ENCODE measurements at regions of chr10 and their contacts with region 1.

Region 1: DNA sequence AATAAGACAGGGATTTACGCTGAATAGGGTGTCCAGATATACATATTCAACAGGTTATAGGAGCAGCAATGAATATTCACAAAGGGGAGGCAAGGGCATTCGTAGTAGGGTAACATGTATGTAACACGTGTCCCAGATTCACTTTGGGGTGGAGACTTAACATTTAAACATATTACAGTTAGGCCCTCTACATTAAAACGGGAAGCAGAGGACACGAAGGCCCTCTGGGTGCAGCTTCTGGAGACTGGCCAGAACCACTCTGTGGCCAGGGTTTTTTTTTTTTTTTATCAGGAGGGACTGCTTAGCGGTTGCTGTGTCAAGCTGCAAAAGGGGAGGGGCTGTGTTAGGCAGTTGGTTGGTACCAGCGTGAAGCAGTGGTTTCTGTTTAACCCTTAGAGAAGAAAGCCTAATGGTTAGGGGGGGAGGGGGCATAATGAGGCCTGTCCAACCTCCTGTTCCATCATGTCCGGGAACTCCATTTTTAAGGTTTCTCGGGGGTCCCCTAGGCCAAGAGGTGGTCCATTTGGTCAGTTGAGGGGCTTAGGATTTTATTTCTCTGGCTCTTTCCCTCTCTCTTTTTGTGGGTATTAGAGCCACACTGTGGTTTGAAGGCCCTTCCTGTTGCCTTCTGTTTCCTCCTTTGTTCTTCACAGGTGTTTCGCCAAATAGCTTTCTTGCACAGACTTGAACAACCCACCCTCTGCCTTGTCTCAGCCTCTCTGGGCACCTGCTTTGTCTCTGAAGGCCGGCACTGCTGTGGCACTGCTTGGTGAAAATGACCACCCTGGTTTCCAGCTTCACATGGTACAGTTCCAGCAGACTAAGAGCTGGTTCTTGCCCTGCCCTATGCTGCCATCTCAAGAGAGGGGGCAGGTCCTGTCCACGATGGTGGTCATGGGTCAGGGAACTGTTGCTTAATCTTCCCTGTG is 26.4 kb downstream of the PRF1 start:
- DNase-seq: no peak
- H3K4me3 Mint-ChIP-seq: no peak overlapping the region
- H3K27ac Mint-ChIP-seq: peak overlapping the region; percentile 93
- H3K4me1 Mint-ChIP-seq: peaks cover 47% of the 10 kb centered on the region
- H3K27me3 Mint-ChIP-seq: peaks cover 7% of the 10 kb centered on the region

Region 2: DNA sequence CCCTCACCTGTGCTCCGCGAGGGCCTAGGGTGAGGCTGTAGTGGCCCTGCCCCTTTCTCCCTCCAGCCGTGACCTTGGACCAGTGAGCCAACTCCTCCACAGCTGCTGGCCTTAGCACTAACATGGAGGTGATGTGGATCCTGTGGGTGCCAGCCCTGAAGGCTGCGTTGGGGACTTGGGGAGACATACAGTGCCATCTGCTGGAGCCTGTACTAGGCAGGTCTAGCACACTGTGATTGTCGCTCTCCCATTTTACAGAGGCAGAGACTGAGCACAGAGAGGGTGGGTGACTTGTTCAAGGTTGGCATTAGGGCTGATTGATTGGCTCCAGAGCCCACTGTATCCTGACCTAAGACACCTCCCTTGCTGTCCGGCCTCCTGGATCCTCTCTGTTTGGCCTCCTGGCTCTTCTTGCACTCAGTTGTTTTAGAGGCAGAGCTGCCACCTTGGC is 11.2 kb before region 1 on chr10:
- intact Hi-C with region 1: no loop called
- DNase-seq: no peak
- H3K4me3 Mint-ChIP-seq: no peak overlapping the region
- H3K27ac Mint-ChIP-seq: no peak overlapping the region
- H3K4me1 Mint-ChIP-seq: peaks cover 10% of the 10 kb centered on the region
- H3K27me3 Mint-ChIP-seq: peaks cover 20% of the 10 kb centered on the region

Region 3: GRCh38 chr10:70587045-70587658 is 11.0 kb after region 1 on chr10:
- intact Hi-C with region 1: loop called (anchors 1 kb)
- DNase-seq: no peak
- H3K4me3 Mint-ChIP-seq: no peak overlapping the region
- H3K27ac Mint-ChIP-seq: peak overlapping the region; percentile 78
- H3K4me1 Mint-ChIP-seq: peaks cover 15% of the 10 kb centered on the region
- H3K27me3 Mint-ChIP-seq: peaks cover 9% of the 10 kb centered on the region

Region 4: GRCh38 chr10:70619271-70620019 is 43.3 kb after region 1 on chr10:
- intact Hi-C with region 1: loop called (anchors 1 kb)
- DNase-seq: no peak
- H3K4me3 Mint-ChIP-seq: no peak overlapping the region
- H3K27ac Mint-ChIP-seq: no peak overlapping the region
- H3K4me1 Mint-ChIP-seq: peaks cover 31% of the 10 kb centered on the region
- H3K27me3 Mint-ChIP-seq: no peaks in the 10 kb centered on the region

Region 5: DNA sequence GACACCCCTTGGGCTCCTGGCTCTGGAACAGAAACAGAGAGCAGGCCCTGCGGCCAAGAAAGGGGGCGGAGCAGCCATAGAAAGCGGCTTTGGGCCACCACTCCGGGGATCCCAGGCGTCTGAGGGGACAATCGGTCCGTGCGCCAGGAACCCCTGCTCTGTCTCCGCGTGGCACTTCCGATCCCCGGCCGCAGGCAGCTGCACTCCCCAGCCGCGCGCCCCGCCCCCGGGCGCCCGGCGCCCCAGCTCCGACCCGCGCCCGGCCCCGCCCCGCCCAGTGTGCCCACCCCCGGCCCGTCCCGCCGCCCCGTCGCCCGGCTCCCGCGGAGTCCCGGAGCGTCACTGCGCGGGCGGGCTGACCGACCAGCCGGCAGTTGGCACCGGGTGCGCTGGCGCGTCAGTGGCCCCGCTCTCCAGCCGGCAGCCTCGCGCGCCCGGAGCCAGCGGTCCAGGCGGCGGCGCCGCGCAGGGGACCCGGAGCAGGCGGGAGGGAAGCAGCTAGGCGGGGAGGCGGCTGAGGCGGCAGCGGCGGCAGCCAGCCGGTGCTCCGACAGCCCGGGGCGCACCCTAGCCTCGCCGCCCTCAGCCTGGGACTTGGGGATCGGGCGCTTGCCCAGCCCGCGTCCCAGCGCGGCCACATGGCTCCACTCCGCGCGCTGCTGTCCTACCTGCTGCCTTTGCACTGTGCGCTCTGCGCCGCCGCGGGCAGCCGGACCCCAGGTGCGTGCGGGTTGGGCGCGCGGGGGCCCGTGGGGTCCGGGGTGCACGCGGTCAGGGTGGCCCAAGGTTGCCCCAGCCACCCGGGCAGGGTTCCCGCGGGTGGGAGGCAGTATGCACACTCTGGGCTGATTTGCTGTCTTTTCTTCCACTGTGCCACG is 96.3 kb after region 1 on chr10 and contains the start of gene ADAMTS14:
- intact Hi-C with region 1: loop called (anchors 5 kb)
- DNase-seq: no peak
- H3K4me3 Mint-ChIP-seq: peak within 1 kb of the TSS; percentile 67
- H3K27ac Mint-ChIP-seq: no peak within 1 kb of the TSS
- H3K4me1 Mint-ChIP-seq: peaks cover 8% of the 10 kb centered on the region
- H3K27me3 Mint-ChIP-seq: peaks cover 47% of the 10 kb centered on the region
- total RNA-seq, gene ADAMTS14: 0.39 and 0.46 TPM in 2 replicates